ENCODE measurements at regions of chr1 and their contacts with region 1.

Region 1: GRCh38 chr1:212234431-212235395 is 50.5 kb upstream of the PPP2R5A start:
- DNase-seq: peak; percentile 38
- H3K4me3 ChIP-seq: no peak overlapping the region
- H3K27ac ChIP-seq: no peak overlapping the region
- H3K4me1 ChIP-seq: peaks cover 8% of the 10 kb centered on the region
- H3K27me3 ChIP-seq: no peaks in the 10 kb centered on the region
- CTCF ChIP-seq: no peak

Region 2: DNA sequence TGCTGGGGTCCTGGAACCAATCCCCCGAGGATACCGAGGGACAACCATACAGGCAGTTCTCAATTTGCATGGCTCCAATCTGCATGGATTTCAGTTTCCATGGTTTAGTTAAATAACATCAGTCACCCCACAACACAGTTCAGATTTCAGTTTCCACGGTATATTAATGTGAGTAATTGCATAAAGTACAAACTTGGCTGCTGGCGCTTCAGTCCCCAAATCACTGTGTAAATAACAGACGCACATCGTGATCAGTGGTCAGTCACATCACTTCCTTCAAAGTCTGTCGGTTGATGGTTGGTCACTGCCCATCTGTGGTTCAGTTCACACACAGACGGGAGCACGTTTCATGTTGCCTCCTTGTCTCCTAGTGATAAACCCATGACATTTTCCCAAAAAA is 337.8 kb before region 1 on chr1:
- intact Hi-C with region 1: no loop called
- DNase-seq: no peak
- H3K4me3 ChIP-seq: no peak overlapping the region
- H3K27ac ChIP-seq: no peak overlapping the region
- H3K4me1 ChIP-seq: no peaks in the 10 kb centered on the region
- H3K27me3 ChIP-seq: no peaks in the 10 kb centered on the region
- CTCF ChIP-seq: no peak

Region 3: GRCh38 chr1:212269306-212269705 is 34.6 kb after region 1 on chr1:
- intact Hi-C with region 1: no loop called
- DNase-seq: no peak
- H3K4me3 ChIP-seq: no peak overlapping the region
- H3K27ac ChIP-seq: no peak overlapping the region
- H3K4me1 ChIP-seq: no peaks in the 10 kb centered on the region
- H3K27me3 ChIP-seq: no peaks in the 10 kb centered on the region
- CTCF ChIP-seq: no peak

Region 4: DNA sequence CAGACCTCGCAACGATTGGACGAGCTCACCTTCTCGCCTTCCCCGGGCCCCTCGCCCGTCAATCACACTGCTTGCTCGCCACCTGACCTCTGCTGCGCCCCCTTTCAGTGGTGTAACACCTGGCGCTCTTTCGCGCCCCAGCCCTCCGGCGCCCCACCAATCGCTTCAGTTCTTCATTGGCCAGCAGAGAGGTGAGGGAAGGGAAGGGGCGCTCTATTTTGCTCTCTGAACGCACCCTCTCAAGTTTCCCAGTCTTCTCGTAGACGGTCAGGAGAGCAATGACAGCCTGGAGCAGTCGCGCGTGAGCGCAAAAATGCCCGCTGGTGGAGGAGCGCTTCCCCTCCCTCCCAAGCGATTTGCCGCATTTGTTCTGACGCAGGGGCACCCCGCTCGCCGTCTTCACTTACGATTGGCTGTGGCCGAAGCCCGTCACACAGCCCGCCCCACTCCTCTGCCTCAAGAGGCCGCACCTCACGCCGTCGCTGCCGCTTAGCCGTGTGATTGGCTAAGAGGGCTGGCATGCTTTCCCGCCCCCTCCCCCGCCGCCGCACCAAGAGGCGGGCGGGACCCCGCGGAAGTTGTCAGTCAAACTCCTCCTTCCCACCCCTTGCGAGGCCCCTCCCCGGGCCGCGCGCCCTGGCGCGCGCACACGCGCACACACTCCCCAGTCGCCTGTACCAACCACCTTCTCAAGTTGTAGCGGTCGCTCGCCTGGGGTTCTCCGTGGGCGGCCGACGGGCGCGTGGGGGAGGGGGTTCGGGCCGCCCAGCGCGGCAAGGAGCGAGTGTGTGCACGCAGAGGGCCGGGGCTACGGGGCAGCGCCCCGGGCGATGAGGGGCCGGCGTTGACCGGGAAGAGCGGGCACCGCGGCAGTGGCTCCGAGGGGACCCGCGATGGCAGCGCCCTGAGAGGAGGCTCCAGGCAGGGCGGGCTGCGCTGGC is 50.3 kb after region 1 on chr1 and contains the start of gene PPP2R5A:
- intact Hi-C with region 1: loop called (anchors 5 kb)
- DNase-seq: peak; percentile 99
- H3K4me3 ChIP-seq: peak within 1 kb of the TSS; percentile 85
- H3K27ac ChIP-seq: peak within 1 kb of the TSS; percentile 99
- H3K4me1 ChIP-seq: peaks cover 20% of the 10 kb centered on the region
- H3K27me3 ChIP-seq: no peaks in the 10 kb centered on the region
- CTCF ChIP-seq: no peak
- total RNA-seq, gene PPP2R5A: 62.4 to 78.2 TPM

Region 5: GRCh38 chr1:212414328-212415106 is 179.8 kb after region 1 on chr1 and contains the start of gene PACC1:
- intact Hi-C with region 1: no loop called
- DNase-seq: peak; percentile 91
- H3K4me3 ChIP-seq: peak within 1 kb of the TSS; percentile 98
- H3K27ac ChIP-seq: peak within 1 kb of the TSS; percentile 47
- H3K4me1 ChIP-seq: no peaks in the 10 kb centered on the region
- H3K27me3 ChIP-seq: no peaks in the 10 kb centered on the region
- CTCF ChIP-seq: no peak
- total RNA-seq, gene PACC1: 2.6 to 3.1 TPM

Measured in colonic mucosa (tissue), 4 donors.